MCF 10A (cell line): ENCODE measurements at regions of chr2 and their contacts with region 1.

Region 1: DNA sequence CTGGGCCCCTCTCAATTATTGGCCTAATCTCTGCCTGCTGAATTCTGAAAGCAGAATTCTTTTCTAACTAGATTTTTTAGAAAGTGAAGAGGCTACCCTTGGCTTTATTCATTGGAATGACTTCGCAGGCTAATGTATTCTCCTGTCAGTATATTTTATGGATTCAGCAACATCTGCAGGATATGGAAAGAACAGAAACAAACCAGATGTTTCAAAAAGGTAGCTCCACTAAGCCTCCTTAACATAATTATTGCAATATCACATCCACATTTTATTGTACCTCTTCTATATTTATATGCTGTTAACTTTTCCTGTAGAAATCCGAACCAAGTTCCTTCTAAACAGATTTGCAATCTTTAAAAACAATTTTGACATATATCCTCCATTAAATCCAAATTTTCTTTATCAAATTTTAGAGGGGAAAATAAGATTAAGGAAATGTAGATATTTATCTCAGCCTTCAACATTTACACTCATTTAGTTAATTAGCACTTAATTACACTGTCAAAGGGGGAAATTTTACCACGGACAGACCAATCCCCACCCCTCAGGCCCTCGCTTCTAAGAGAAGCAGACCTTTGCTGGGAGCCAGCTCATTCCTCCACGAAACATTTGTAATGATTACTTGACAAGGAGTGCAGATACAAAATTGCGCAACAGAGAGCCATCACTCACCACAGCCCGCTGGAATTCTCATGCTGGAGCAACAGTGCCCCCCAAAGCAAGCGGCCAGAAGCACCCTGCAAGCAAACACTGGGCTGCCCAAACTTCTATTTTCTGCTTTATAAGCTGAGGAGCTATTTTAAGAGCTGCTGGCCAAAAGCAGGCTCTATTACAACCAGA is 253.4 kb downstream of the ETAA1 start:
- DNase-seq: peak; percentile 88
- H3K4me3 Mint-ChIP-seq: no peak overlapping the region
- H3K27ac Mint-ChIP-seq: peak overlapping the region; percentile 78
- H3K4me1 Mint-ChIP-seq: peaks cover 25% of the 10 kb centered on the region
- H3K27me3 Mint-ChIP-seq: no peaks in the 10 kb centered on the region
- CTCF ChIP-seq: peak; percentile 84

Region 2: GRCh38 chr2:67215214-67216055 is 435.1 kb before region 1 on chr2:
- CTCF ChIA-PET with region 1: interaction called, 3 read pairs
- POLR2A ChIA-PET with region 1: no interaction called
- intact Hi-C with region 1: loop called (anchors 2 kb)
- DNase-seq: peak; percentile 76
- H3K4me3 Mint-ChIP-seq: peak overlapping the region; percentile 21
- H3K27ac Mint-ChIP-seq: peak overlapping the region; percentile 32
- H3K4me1 Mint-ChIP-seq: peaks cover 6% of the 10 kb centered on the region
- H3K27me3 Mint-ChIP-seq: no peaks in the 10 kb centered on the region
- CTCF ChIP-seq: peak; percentile 77

Region 3: DNA sequence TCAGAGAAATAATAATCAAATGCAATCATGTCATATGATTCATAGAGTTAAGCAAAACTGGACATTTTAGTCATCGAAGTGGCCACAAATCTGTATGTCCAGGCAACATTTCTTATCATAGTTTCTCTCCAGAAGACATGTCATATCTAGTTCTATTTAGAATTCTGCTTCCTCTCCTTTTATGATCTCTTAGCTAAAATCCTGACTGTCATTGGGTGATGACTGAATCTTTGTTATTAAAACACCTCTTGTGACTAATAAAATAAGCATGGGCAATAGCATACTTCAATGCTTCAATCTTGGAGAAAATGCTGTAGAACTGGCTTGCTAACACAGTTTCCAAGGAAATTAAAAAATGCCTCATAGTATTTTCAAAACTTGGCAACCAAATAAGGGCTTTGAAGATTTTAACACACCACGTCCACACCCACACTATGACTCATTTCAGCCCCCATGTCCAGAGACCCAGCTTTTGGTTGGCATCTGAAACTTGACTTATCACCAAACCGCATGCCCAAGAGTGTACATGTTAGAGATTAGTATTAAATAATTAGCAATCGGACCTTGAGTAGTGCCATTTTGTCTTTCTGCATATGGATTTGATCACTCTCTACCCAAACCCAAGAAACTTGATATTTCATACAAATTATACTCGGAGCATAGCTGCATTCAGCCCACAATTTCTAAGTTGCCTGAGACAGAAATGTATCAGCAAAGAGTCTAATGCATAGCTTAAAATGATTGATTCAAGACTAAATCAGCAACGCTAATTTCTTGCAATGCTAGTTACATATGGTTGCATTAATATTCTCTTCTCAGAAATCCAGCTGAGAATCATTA is 359.8 kb before region 1 on chr2:
- CTCF ChIA-PET with region 1: no interaction called
- POLR2A ChIA-PET with region 1: no interaction called
- intact Hi-C with region 1: loop called (anchors 1 kb)
- DNase-seq: peak; percentile 74
- H3K4me3 Mint-ChIP-seq: no peak overlapping the region
- H3K27ac Mint-ChIP-seq: peak overlapping the region; percentile 89
- H3K4me1 Mint-ChIP-seq: peaks cover 16% of the 10 kb centered on the region
- H3K27me3 Mint-ChIP-seq: no peaks in the 10 kb centered on the region
- CTCF ChIP-seq: no peak

Region 4: DNA sequence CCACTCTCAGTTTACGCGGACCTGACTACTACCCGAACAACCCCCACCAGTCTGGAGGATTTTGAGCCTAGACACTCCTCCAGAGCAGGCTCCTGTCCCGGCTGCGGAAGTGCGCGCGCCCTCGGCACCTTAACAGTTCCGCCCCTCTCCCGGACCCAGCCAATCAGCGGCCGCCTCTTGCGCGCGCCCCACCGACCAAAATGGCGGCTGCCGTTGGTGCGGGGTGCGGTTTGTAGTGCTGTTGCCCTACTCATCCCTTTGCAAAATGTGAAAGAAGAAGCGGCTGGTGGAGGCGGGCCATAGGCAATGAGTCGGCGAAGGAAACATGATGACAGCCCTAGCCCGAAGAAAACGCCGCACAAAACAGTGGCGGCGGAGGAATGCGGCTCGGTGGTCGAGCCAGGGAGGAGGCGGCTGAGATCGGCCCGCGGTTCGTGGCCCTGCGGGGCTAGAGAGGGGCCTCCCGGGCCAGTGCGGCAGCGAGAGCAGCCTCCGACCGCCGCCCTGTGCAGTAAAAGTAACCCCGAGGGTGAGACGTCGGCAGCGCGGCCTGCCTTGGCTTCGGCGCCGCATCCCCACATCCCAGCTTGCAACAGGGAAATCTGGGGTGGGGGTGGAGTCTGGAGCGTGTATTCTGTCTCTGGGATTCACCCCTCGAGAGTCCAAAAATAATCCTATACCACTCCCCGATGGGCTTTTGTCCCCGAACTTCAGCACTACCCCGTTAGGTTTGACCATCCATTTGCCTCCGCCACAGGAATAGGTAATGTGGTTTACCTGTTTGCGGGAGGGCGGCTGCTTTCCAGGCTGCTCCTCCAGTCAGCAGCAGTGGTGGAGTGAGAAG is 253.1 kb before region 1 on chr2 and contains the start of gene ETAA1:
- CTCF ChIA-PET with region 1: interaction called, 4 read pairs
- POLR2A ChIA-PET with region 1: interaction called, 9 read pairs
- intact Hi-C with region 1: loop called (anchors 2 kb)
- DNase-seq: peak; percentile 92
- H3K4me3 Mint-ChIP-seq: peak within 1 kb of the TSS; percentile 91
- H3K27ac Mint-ChIP-seq: peak within 1 kb of the TSS; percentile 92
- H3K4me1 Mint-ChIP-seq: peaks cover 36% of the 10 kb centered on the region
- H3K27me3 Mint-ChIP-seq: no peaks in the 10 kb centered on the region
- CTCF ChIP-seq: no peak
- total RNA-seq, gene ETAA1: 10.4 and 11.7 TPM in 2 replicates

Region 5: GRCh38 chr2:67561457-67561965 is 89.0 kb before region 1 on chr2:
- CTCF ChIA-PET with region 1: no interaction called
- POLR2A ChIA-PET with region 1: interaction called, 22 read pairs
- intact Hi-C with region 1: no loop called
- DNase-seq: peak; percentile 84
- H3K4me3 Mint-ChIP-seq: peak overlapping the region; percentile 46
- H3K27ac Mint-ChIP-seq: peak overlapping the region; percentile 97
- H3K4me1 Mint-ChIP-seq: peaks cover 39% of the 10 kb centered on the region
- H3K27me3 Mint-ChIP-seq: no peaks in the 10 kb centered on the region
- CTCF ChIP-seq: no peak

Region 6: DNA sequence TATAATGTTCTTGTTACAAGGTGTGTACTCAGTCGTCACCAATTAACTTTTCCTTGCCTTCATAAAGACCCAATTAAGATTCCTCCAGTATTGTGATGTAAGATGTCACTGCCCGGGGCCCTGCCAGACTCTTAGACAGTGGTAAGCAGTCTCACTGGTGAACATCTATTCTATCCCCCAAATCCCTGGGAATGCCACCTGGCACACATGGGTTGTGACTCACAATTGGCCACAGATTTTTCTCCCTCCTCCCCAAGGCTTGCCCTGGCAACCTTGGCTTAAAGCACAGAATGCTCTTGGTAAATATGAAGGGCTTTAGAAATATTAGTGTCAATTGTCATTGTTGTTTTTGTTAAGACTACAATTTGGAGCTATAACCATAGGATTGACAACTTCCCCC is 34.5 kb after region 1 on chr2:
- CTCF ChIA-PET with region 1: no interaction called
- POLR2A ChIA-PET with region 1: no interaction called
- intact Hi-C with region 1: no loop called
- DNase-seq: peak; percentile 8
- H3K4me3 Mint-ChIP-seq: no peak overlapping the region
- H3K27ac Mint-ChIP-seq: no peak overlapping the region
- H3K4me1 Mint-ChIP-seq: no peaks in the 10 kb centered on the region
- H3K27me3 Mint-ChIP-seq: no peaks in the 10 kb centered on the region
- CTCF ChIP-seq: no peak

Region 7: DNA sequence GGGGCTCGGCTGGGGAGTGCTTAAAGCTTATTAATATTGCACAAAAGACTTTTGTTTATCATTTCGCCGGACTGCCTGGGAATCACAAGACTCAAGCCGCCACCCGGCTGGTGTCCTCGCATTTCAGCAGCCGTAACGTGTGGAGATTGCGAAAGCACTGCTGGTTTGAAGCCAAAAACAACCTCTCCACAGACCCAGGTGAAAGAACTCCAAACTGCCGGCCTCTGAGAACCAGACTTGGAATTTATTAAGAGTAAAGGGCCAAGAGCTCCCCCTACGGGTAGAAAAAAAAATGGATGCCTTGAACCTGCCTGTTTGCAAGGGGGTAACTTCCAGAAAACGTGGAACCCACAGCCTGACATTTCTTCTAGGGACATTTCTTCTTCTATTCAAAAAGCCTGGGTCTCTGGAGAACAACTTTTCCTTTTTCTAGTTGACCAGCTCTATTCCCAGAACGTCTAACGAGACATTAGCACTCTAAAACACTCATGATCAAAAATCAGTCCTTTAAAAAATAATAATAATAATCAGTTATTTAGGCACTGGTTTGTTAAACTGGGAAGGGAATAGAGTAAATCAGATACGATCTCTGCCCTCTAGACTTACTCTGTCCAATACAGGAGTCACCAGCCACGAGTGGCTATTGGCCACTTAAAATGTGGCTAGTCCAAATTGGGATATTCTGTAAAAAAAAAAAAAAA is 196.0 kb after region 1 on chr2:
- CTCF ChIA-PET with region 1: interaction called, 15 read pairs
- POLR2A ChIA-PET with region 1: interaction called, 8 read pairs
- intact Hi-C with region 1: loop called (anchors 2 kb)
- DNase-seq: peak; percentile 99
- H3K4me3 Mint-ChIP-seq: no peak overlapping the region
- H3K27ac Mint-ChIP-seq: peak overlapping the region; percentile 95
- H3K4me1 Mint-ChIP-seq: peaks cover 14% of the 10 kb centered on the region
- H3K27me3 Mint-ChIP-seq: no peaks in the 10 kb centered on the region
- CTCF ChIP-seq: peak; percentile 74